Calu3 (cell line): ENCODE measurements at regions of chr5 and their contacts with region 1.

Region 1: GRCh38 chr5:146533260-146533857 is 17.4 kb upstream of the GPR151 start:
- DNase-seq: peak; percentile 84
- H3K4me3 Mint-ChIP-seq: no peak overlapping the region
- H3K27ac Mint-ChIP-seq: no peak overlapping the region
- H3K4me1 Mint-ChIP-seq: peaks cover 9% of the 10 kb centered on the region
- H3K27me3 Mint-ChIP-seq: peaks cover 6% of the 10 kb centered on the region
- CTCF ChIP-seq: peak; percentile 75

Region 2: DNA sequence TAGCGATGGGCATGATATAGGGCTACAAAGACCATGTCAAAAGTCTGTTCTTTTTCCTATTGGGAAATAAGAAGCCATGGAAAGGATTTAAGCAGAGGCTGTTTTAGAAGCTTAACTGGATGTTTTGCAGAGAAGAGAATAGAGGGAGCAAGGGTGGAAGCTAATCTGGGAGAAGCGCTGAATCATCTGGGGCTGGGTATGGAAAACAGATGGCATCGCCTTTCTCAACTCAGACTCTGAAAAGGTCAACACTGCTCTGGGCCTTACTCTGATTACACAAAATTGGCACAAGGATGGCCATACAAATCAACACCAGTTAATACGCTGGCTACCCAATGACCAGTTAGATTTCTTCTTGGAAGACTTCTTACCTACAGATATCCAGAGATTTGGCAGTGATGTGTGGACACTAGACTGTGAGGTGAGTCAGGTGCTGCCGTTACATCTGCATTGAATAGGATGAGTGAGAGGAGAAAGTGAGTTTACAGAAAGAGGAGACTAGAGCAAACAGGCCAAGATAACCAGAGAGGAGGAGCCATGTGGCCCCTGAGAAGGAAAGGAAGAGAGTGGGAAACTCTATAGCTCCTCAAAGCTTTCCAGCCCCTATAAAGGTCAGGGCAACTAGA is 92.4 kb before region 1 on chr5:
- CTCF ChIA-PET with region 1: no interaction called
- intact Hi-C with region 1: no loop called
- DNase-seq: no peak
- H3K4me3 Mint-ChIP-seq: no peak overlapping the region
- H3K27ac Mint-ChIP-seq: no peak overlapping the region
- H3K4me1 Mint-ChIP-seq: no peaks in the 10 kb centered on the region
- H3K27me3 Mint-ChIP-seq: peaks cover 14% of the 10 kb centered on the region
- CTCF ChIP-seq: no peak

Region 3: DNA sequence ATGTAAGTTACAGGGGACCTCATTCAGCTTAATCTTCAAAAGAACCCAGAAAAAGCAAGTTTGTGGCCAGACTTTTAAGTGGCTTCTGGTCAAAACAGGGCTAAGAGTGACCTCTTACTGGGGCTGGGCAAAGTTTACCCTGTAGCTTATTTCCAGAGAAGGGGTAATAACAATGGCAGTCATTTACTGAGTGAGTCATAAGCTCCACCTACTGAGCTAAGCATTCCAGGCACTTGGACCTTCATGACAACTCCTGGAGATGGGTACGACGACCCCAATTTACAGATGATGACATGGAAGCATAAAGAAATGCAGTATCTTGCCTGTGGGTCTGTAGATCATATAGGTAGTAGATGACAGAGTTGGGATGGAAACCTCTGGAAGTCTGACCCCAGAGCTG is 12.6 kb before region 1 on chr5:
- CTCF ChIA-PET with region 1: interaction called, 16 read pairs
- intact Hi-C with region 1: no loop called
- DNase-seq: no peak
- H3K4me3 Mint-ChIP-seq: no peak overlapping the region
- H3K27ac Mint-ChIP-seq: no peak overlapping the region
- H3K4me1 Mint-ChIP-seq: peaks cover 9% of the 10 kb centered on the region
- H3K27me3 Mint-ChIP-seq: peaks cover 13% of the 10 kb centered on the region
- CTCF ChIP-seq: no peak